ENCODE measurements at regions of chr11 and their contacts with region 1.

Region 1: GRCh38 chr11:125111343-125112207 is at the start of gene TMEM218:
- DNase-seq: peak; percentile 99
- H3K4me3 ChIP-seq: peak within 1 kb of the TSS; percentile 89
- H3K27ac ChIP-seq: peak within 1 kb of the TSS; percentile 39
- H3K4me1 ChIP-seq: peaks cover 17% of the 10 kb centered on the region
- CTCF ChIP-seq: no peak
- total RNA-seq, gene TMEM218: 19.6 and 28.1 TPM in 2 replicates

Region 2: GRCh38 chr11:124970925-124971324 is 140.7 kb before region 1 on chr11:
- CTCF ChIA-PET with region 1: no interaction called
- POLR2A ChIA-PET with region 1: no interaction called
- intact Hi-C with region 1: no loop called
- DNase-seq: no peak
- H3K4me3 ChIP-seq: no peak overlapping the region
- H3K27ac ChIP-seq: no peak overlapping the region
- H3K4me1 ChIP-seq: no peaks in the 10 kb centered on the region
- CTCF ChIP-seq: 0 out of 2 replicates have a peak, but pooled peaks have one; percentile 25

Region 3: GRCh38 chr11:125070699-125071254 is 40.8 kb before region 1 on chr11:
- CTCF ChIA-PET with region 1: interaction called, 3 read pairs
- POLR2A ChIA-PET with region 1: interaction called, 15 read pairs
- intact Hi-C with region 1: loop called (anchors 5 kb)
- DNase-seq: peak; percentile 33
- H3K4me3 ChIP-seq: no peak overlapping the region
- H3K27ac ChIP-seq: no peak overlapping the region
- H3K4me1 ChIP-seq: peaks cover 45% of the 10 kb centered on the region
- CTCF ChIP-seq: no peak

Region 4: GRCh38 chr11:125123947-125124617 is 12.5 kb after region 1 on chr11:
- CTCF ChIA-PET with region 1: interaction called, 20 read pairs
- POLR2A ChIA-PET with region 1: interaction called, 19 read pairs
- intact Hi-C with region 1: no loop called
- DNase-seq: peak; percentile 78
- H3K4me3 ChIP-seq: peak overlapping the region; percentile 32
- H3K27ac ChIP-seq: no peak overlapping the region
- H3K4me1 ChIP-seq: peaks cover 4% of the 10 kb centered on the region
- CTCF ChIP-seq: peak; percentile 89

Measured in OCI-LY7 (cell line).